ENCODE measurements at regions of chr5 and their contacts with region 1.

Region 1: DNA sequence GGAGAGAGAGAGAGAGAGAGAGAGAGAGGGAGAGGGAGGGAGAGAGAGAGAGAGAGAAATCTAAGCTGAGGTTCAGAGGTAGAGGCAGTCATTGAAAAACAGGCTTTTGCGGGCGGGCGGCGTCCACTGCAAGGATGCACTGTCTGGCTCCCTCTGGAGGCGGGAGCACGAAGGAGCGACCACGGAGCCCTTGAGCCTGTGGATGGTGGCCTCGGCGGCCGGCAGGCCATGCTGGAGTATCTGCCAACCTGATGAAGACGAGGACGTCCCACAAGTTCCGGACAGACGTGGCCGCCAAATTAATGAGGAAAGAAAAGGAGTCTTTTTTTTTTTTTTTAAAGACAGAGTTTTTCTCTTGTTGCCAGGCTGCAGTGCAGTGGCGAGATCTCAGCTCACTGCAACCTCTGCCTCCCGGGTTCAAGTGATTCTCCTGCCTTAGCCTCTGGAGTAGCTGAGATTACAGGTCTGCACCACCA is 2.2 kb upstream of the CCDC125 start:
- DNase-seq: peak; percentile 93
- H3K4me3 Mint-ChIP-seq: no peak overlapping the region
- H3K27ac Mint-ChIP-seq: peak overlapping the region; percentile 3
- H3K4me1 Mint-ChIP-seq: peaks cover 17% of the 10 kb centered on the region
- H3K27me3 Mint-ChIP-seq: no peaks in the 10 kb centered on the region

Region 2: DNA sequence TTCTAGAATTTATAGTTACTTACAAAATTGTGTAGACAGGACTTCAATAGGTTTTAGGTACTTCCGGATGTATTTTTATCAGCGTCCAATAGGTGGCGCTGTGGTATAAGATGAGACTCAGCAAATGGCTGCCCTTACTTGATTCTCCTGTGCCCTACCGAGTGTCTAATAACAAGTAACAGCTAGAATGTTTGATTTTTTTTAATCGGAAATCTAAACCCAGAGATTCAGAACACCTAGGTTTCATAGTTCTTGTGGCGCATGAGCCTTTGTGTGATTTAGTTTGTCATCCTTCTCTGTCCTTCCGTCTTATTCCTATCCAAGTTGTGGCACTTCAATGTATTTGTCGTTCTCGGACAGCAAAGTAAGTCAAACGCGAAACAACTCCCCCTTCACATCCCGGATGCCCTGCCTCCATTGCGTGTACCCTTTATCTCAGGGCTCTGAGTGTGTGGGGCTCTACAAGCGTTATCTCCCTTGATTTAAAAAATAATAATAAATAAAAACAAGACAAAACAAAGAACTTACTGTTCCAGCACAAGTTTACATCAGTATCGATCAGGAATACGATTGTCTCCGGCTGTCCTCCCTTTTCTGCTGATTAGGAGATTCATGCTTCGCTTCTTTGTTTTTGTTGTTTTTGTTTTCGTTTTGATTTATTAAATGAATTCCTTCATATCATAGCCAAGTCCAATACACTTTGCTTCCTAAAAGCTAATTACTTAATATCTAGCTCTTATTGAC is 291.7 kb before region 1 on chr5:
- intact Hi-C with region 1: loop called (anchors 1 kb)
- DNase-seq: peak; percentile 94
- H3K4me3 Mint-ChIP-seq: peak overlapping the region; percentile 93
- H3K27ac Mint-ChIP-seq: peak overlapping the region; percentile 87
- H3K4me1 Mint-ChIP-seq: peaks cover 10% of the 10 kb centered on the region
- H3K27me3 Mint-ChIP-seq: no peaks in the 10 kb centered on the region